A673 (cell line): ENCODE measurements at regions of chr1 and their contacts with region 1.

Region 1: DNA sequence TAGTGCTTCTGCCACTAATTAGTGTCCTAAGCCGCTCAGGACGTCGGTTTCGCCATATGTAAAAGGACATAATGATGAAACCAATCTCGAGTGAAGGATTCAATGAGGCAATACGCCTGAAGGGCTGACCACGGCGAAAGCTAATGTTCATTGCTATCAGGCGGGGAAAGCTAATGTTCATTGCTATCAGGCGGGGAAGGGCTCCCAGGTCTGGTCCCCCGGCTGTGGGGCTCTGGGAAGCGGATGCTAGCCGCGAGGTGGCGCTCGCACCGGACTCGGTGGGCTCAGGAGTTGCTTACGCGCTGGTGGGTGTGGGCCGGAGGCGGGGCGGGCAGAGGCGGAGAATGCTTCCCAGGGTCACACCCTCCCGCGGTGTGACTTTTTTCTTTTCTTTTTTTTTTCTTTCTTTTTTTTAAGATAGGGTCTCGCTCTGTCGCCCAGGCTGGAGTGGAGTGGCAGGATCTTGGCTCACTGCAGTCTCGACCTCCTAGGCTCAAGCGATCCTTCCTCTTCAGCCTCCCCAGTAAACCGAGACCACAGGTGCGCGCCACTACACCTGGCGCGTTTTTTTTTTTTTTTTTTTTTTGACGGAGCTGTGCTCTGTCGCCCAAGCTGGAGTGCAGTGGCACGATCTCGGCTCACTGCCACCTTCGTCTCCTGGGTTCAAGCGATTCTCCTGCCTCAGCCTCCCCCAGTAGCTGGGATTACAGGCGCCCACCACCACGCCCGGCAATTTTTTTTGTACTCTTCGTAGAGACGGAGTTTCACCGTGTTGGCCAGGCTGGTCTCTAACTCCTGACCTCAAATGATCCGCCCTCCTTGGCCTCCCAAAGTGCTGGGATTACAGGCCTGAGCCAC is 1.1 kb upstream of the PEAR1 start:
- DNase-seq: peak; percentile 93
- H3K4me3 ChIP-seq: peak overlapping the region; percentile 29
- H3K27ac ChIP-seq: no peak overlapping the region
- H3K4me1 ChIP-seq: no peaks in the 10 kb centered on the region
- H3K27me3 ChIP-seq: no peaks in the 10 kb centered on the region
- CTCF ChIP-seq: peak; percentile 96

Region 2: GRCh38 chr1:156212833-156213643 is 679.4 kb before region 1 on chr1 and contains the start of gene PMF1:
- CTCF ChIA-PET with region 1: no interaction called
- POLR2A ChIA-PET with region 1: no interaction called
- intact Hi-C with region 1: no loop called
- DNase-seq: peak; percentile 99
- H3K4me3 ChIP-seq: peak within 1 kb of the TSS; percentile 64
- H3K27ac ChIP-seq: peak within 1 kb of the TSS; percentile 99
- H3K4me1 ChIP-seq: peaks cover 10% of the 10 kb centered on the region
- H3K27me3 ChIP-seq: no peaks in the 10 kb centered on the region
- CTCF ChIP-seq: no peak
- total RNA-seq, gene PMF1: 89.6 and 96.6 TPM in 2 replicates

Region 3: GRCh38 chr1:156838981-156839410 is 53.4 kb before region 1 on chr1:
- CTCF ChIA-PET with region 1: interaction called, 12 read pairs
- POLR2A ChIA-PET with region 1: no interaction called
- intact Hi-C with region 1: no loop called
- DNase-seq: peak; percentile 51
- H3K4me3 ChIP-seq: no peak overlapping the region
- H3K27ac ChIP-seq: no peak overlapping the region
- H3K4me1 ChIP-seq: no peaks in the 10 kb centered on the region
- H3K27me3 ChIP-seq: no peaks in the 10 kb centered on the region
- CTCF ChIP-seq: peak; percentile 96

Region 4: DNA sequence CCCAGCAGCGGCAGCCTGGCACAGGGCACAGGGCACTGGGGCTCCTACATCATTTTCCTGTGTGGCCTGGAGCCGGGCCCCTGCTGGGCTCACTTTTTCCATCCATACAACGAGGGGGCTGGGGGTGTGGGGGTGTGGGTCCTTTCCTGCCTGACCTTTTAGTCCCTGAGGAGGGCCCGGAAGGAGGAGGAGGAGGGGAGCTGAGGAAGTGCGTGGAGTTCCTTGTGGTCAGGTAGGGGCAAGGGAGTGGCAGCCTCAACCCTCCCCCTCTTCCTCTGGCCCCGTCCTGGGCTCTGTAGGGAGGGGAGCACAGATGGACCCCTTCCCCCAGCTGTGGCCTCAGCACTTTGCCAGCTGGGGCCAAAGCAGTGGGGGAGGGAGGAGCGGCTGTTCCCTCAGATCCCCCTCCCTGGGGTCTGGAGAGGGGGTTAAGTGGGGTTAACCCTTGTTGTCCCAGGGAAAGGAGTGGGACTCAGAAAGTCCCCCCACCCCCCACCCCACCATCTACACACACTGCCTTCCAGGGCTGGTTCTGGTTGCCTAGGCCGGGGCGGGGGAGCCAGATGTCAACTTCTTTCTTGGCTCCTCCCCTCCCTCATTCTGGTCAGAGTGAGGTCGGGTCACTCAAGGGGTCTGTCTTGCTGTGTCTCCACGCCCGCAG is 26.0 kb before region 1 on chr1:
- CTCF ChIA-PET with region 1: interaction called, 8 read pairs
- POLR2A ChIA-PET with region 1: interaction called, 12 read pairs
- intact Hi-C with region 1: loop called (anchors 2 kb)
- DNase-seq: no peak
- H3K4me3 ChIP-seq: no peak overlapping the region
- H3K27ac ChIP-seq: no peak overlapping the region
- H3K4me1 ChIP-seq: peaks cover 10% of the 10 kb centered on the region
- H3K27me3 ChIP-seq: peaks cover under 1% of the 10 kb centered on the region
- CTCF ChIP-seq: no peak

Region 5: DNA sequence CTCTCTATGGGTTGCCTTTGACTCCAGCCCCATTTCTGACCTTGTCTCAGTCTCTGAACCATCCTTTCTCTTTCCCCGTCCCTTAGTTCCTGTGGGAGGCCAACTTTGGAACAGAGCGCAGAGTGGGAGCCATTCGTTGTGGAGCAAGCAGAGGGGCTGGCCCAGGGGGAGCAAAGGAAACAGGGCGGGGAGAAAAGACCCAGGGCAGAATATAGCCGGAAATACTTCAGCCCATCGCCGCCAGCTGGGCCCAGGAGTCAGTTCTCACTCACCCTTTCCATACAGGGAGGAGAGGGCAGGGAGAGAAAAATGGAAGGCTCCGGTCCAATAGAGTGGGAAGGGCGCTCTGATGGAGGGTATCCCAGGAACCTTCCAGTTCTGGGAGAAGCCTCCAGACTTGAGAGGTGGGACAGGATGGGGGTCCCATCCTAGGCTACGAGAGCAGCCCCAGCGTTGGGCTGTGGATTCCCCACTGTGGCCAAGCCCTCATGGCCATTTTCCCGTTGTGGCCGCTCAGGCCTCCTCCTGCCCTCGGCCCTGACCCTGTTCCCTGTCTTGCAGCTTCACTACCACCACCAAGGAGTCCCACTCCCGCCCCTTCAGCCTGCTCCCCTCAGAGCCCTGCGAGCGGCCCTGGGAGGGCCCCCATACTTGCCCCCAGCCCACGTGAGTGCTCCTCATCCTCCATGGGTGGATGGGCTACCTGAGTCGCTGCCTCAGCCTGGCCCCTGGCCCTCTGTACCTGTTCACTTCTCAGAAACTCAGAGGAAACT is 12.0 kb after region 1 on chr1:
- CTCF ChIA-PET with region 1: no interaction called
- POLR2A ChIA-PET with region 1: no interaction called
- intact Hi-C with region 1: no loop called
- DNase-seq: no peak
- H3K4me3 ChIP-seq: no peak overlapping the region
- H3K27ac ChIP-seq: no peak overlapping the region
- H3K4me1 ChIP-seq: no peaks in the 10 kb centered on the region
- H3K27me3 ChIP-seq: no peaks in the 10 kb centered on the region
- CTCF ChIP-seq: no peak

Region 6: GRCh38 chr1:156927215-156928042 is 35.0 kb after region 1 on chr1:
- CTCF ChIA-PET with region 1: interaction called, 11 read pairs
- POLR2A ChIA-PET with region 1: interaction called, 3 read pairs
- intact Hi-C with region 1: loop called (anchors 2 kb)
- DNase-seq: peak; percentile 85
- H3K4me3 ChIP-seq: peak overlapping the region; percentile 31
- H3K27ac ChIP-seq: no peak overlapping the region
- H3K4me1 ChIP-seq: no peaks in the 10 kb centered on the region
- H3K27me3 ChIP-seq: peaks cover 35% of the 10 kb centered on the region
- CTCF ChIP-seq: peak; percentile 81

Region 7: GRCh38 chr1:157156058-157156541 is 263.7 kb after region 1 on chr1:
- CTCF ChIA-PET with region 1: interaction called, 4 read pairs
- POLR2A ChIA-PET with region 1: no interaction called
- intact Hi-C with region 1: loop called (anchors 10 kb)
- DNase-seq: peak; percentile 79
- H3K4me3 ChIP-seq: no peak overlapping the region
- H3K27ac ChIP-seq: no peak overlapping the region
- H3K4me1 ChIP-seq: peaks cover 56% of the 10 kb centered on the region
- H3K27me3 ChIP-seq: no peaks in the 10 kb centered on the region
- CTCF ChIP-seq: peak; percentile 96